ENCODE measurements at regions of chr1 and their contacts with region 1.

Region 1: DNA sequence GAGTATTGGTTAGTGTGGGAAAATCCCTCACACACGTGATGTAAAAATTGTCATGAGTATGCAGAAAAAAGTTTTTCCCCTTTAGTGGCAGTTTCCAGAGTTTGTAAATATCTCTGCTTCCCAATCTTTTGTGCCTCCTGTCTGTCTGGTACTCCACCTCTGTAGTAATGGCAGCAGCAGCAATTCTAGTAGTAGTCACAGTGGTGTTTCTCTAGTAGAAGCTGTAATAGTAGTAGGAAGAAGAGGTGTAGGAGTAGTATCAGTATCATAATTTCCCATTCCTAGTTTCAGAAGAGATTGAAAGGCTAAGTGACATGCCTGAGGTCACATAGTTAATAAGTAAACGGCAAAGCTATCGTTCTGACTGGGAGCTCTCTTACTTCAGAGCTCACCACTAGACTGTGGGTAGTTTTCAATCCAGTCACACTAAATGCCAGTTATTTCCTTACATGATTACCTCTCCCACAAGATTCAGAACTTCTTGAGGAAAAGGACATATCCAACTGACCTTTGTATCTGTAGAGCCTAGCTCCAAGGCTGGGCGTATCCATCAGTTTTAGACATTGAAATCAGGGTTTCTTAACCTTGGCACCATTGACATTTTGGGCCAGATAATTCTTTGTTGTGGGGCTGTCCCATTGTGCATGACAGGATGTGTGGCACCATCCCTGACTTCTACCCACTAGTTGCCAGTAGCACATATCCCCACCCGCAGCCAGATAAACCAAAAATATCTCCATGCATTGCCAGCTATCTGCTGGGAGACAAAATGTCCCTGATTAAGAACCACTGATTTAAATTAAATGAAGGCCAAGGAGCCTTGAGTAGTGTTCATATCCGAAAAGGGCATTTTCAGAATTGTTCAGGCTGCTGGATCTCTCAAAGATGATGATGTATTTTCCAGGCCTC is 135.9 kb downstream of the FGGY start:
- DNase-seq: no peak
- H3K4me3 ChIP-seq: no peak overlapping the region
- H3K27ac ChIP-seq: no peak overlapping the region
- H3K4me1 ChIP-seq: no peaks in the 10 kb centered on the region
- H3K27me3 ChIP-seq: no peaks in the 10 kb centered on the region
- CTCF ChIP-seq: no peak
- POLR2A ChIP-seq: no peak

Region 2: DNA sequence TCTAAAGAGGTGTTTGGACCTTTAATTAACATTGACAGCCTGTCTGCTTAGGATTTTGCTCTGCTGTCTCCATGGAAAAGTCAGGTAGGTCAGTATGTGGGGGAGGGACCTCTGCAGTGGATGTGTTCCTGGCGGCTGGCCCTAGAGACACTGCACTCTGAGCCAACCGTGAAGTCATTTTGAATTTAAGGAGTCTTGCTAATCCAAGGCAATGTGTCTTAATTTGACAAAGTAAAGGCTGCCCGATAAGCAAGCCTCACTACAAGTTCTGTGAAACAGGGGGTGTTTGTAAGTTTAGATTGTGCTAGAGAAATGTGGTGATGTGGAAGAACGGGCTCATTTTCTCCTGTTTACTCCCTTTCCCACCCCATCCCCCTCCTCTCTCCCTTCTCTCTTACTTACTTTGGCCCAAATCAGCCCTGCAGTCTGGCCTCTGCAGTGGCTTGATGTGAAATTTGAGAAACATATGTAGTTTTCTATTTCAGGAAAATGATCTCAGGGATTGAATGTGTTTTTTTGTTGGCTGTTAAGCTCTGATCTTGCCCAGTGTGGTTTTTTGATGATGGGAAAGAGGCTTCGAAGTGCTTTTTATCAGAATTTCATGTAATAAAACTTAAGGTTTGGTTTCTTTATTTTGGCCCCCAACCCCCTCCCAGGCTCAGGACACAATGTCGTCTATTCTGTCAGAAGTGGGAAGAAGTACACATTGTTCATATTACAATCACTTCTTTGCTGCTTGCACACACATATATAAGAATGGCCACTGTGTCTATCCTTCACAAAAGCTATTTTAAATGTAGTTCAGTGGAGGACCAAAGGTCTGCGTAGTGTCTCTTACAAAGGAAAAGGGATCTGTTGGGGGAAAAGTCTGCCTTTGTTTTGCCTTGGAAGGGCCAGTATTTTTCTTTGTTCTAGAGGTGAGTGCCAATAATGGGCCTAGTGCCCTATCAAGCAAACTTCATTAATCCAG is 39.3 kb before region 1 on chr1:
- CTCF ChIA-PET with region 1: no interaction called
- POLR2A ChIA-PET with region 1: no interaction called
- dilution Hi-C with region 1: no loop called
- intact Hi-C with region 1: loop called (anchors 1 kb)
- DNase-seq: peak; percentile 75
- H3K4me3 ChIP-seq: no peak overlapping the region
- H3K27ac ChIP-seq: no peak overlapping the region
- H3K4me1 ChIP-seq: no peaks in the 10 kb centered on the region
- H3K27me3 ChIP-seq: no peaks in the 10 kb centered on the region
- CTCF ChIP-seq: no peak
- POLR2A ChIP-seq: no peak

Region 3: DNA sequence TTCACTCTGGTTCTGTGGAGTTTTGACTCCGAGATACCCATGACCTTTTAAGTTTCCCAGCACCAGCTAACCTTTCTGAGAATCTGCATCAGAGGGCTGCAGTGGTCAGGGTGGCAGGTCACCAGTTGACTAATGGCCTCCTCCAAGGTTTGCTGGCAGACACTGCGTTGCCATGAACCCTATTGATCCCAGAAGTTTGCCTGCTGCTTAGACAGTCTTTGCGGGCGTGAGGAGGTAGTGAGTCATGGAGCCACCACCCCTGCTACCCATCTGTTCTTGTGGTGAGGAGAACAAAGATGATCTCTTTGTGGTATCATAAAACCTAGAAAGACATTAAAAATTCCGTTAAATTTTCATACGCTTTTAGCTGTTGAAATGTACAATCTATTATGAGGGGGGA is 44.5 kb after region 1 on chr1:
- CTCF ChIA-PET with region 1: no interaction called
- POLR2A ChIA-PET with region 1: no interaction called
- dilution Hi-C with region 1: no loop called
- intact Hi-C with region 1: no loop called
- DNase-seq: no peak
- H3K4me3 ChIP-seq: no peak overlapping the region
- H3K27ac ChIP-seq: no peak overlapping the region
- H3K4me1 ChIP-seq: no peaks in the 10 kb centered on the region
- H3K27me3 ChIP-seq: no peaks in the 10 kb centered on the region
- CTCF ChIP-seq: no peak
- POLR2A ChIP-seq: no peak

Region 4: DNA sequence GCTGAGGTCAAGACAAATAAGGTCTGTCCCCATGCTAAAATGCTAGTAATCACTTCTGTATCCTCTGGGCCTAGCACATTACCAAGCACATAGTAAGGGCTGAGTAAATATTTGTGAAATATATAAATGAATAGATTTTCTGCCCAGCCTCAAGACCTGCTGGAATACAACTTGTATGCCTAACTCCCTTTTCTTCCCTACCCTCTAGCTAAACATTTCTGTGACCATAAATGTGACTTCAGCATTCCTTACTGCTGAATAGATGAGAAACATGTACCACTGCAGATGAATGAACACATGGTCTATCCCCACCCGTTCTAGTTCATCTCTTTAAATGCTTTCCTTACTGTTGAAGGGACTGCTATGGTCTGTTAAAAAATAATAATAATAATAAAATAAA is 173.0 kb after region 1 on chr1:
- CTCF ChIA-PET with region 1: no interaction called
- POLR2A ChIA-PET with region 1: no interaction called
- dilution Hi-C with region 1: no loop called
- intact Hi-C with region 1: no loop called
- DNase-seq: no peak
- H3K4me3 ChIP-seq: no peak overlapping the region
- H3K27ac ChIP-seq: no peak overlapping the region
- H3K4me1 ChIP-seq: no peaks in the 10 kb centered on the region
- H3K27me3 ChIP-seq: no peaks in the 10 kb centered on the region
- CTCF ChIP-seq: no peak
- POLR2A ChIP-seq: no peak